Right cardiac atrium (tissue), 5 donors: ENCODE measurements at regions of chr1 and their contacts with region 1.

Region 1: GRCh38 chr1:151024540-151025146 is 11.7 kb upstream of the BNIPL start:
- DNase-seq: peak; percentile 83 to 93 (median 88)
- ATAC-seq: peak; percentile 87 to 92
- H3K4me3 ChIP-seq: no peak overlapping the region
- H3K27ac ChIP-seq: peak overlapping the region; percentile 0
- H3K4me1 ChIP-seq: no peaks in the 10 kb centered on the region
- H3K27me3 ChIP-seq: no peaks in the 10 kb centered on the region

Region 2: DNA sequence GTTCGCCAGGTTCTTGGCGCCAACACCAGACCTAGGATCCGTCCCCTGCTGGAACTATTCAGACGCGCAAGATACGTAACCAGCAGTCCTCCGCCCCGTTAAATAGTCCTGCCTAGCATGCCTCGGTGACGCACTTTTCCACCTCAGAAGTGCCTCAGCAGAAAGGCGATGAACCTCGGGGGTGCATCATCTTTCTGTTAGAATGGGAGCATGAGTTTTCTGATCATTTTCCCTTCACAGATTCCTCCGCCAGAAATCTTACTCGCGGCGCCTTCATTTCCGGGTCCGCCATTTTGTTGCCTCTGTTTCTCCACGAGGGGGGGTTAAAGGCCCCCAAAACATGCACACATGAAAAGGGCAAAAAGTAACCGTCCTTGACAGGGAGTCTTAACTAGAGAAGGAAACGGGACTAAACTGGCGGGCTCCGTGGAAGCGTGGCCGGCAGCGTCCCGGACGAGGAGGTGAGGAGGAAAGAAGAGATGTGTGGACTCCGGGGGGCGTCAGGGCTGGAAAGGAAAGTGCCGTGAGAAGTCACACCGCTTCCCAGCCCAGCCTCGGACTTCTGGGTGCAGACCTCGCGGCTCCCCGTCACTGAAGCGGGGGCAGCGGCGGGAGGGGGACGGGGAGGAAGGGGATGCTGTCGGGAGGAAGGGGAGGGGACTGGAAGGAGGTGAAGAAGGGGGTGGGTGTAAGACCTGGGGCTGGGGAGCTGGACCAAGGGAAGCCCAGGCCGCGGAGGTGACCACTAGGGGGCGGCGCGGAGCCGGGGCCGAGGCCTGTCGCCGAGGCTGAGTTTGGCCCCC is 46.0 kb after region 1 on chr1 and contains the start of gene GABPB2:
- intact Hi-C with region 1: no loop called
- DNase-seq: peak; percentile 96 to 97 (median 97)
- ATAC-seq: peak; percentile 95 to 96
- H3K4me3 ChIP-seq: peak within 1 kb of the TSS; percentile 74
- H3K27ac ChIP-seq: peak within 1 kb of the TSS; percentile 94
- H3K4me1 ChIP-seq: no peaks in the 10 kb centered on the region
- H3K27me3 ChIP-seq: no peaks in the 10 kb centered on the region
- total RNA-seq, gene GABPB2: 15.6 to 20.3 (median 18.4) TPM

Region 3: GRCh38 chr1:151130987-151131586 is 106.4 kb after region 1 on chr1:
- intact Hi-C with region 1: loop called in 1 of 4 experiments (anchors 10 kb)
- DNase-seq: peak; percentile 88 to 94 (median 93)
- ATAC-seq: peak; percentile 92 to 94
- H3K4me3 ChIP-seq: peak overlapping the region; percentile 54
- H3K27ac ChIP-seq: peak overlapping the region; percentile 83
- H3K4me1 ChIP-seq: no peaks in the 10 kb centered on the region
- H3K27me3 ChIP-seq: no peaks in the 10 kb centered on the region